ENCODE measurements at regions of chrX and their contacts with region 1.

Region 1: GRCh38 chrX:48737213-48737938 is 24.2 kb upstream of the GLOD5 start:
- DNase-seq: peak; percentile 92
- H3K4me3 Mint-ChIP-seq: peak overlapping the region; percentile 95
- H3K27ac Mint-ChIP-seq: peak overlapping the region; percentile 94
- H3K4me1 Mint-ChIP-seq: peaks cover 17% of the 10 kb centered on the region
- H3K27me3 Mint-ChIP-seq: no peaks in the 10 kb centered on the region

Region 2: GRCh38 chrX:48574270-48575266 is 162.8 kb before region 1 on chrX and contains the start of gene RBM3:
- CTCF ChIA-PET with region 1: interaction called, 3 read pairs
- intact Hi-C with region 1: loop called (anchors 5 kb)
- DNase-seq: peak; percentile 95
- H3K4me3 Mint-ChIP-seq: peak within 1 kb of the TSS; percentile 96
- H3K27ac Mint-ChIP-seq: peak within 1 kb of the TSS; percentile 99
- H3K4me1 Mint-ChIP-seq: peaks cover 32% of the 10 kb centered on the region
- H3K27me3 Mint-ChIP-seq: no peaks in the 10 kb centered on the region
- total RNA-seq, gene RBM3: 139 to 143 TPM

Region 3: GRCh38 chrX:48696301-48697181 is 40.8 kb before region 1 on chrX and contains the start of gene SUV39H1:
- CTCF ChIA-PET with region 1: interaction called, 8 read pairs
- intact Hi-C with region 1: loop called (anchors 1 kb)
- DNase-seq: peak; percentile 87
- H3K4me3 Mint-ChIP-seq: peak within 1 kb of the TSS; percentile 89
- H3K27ac Mint-ChIP-seq: peak within 1 kb of the TSS; percentile 91
- H3K4me1 Mint-ChIP-seq: peaks cover 36% of the 10 kb centered on the region
- H3K27me3 Mint-ChIP-seq: no peaks in the 10 kb centered on the region
- total RNA-seq, gene SUV39H1: 31.5 to 31.9 TPM

Region 4: GRCh38 chrX:48751343-48751742 is 14.0 kb after region 1 on chrX:
- CTCF ChIA-PET with region 1: no interaction called
- intact Hi-C with region 1: loop called (anchors 1 kb)
- DNase-seq: peak; percentile 28
- H3K4me3 Mint-ChIP-seq: no peak overlapping the region
- H3K27ac Mint-ChIP-seq: peak overlapping the region; percentile 24
- H3K4me1 Mint-ChIP-seq: peaks cover 6% of the 10 kb centered on the region
- H3K27me3 Mint-ChIP-seq: no peaks in the 10 kb centered on the region

Region 5: GRCh38 chrX:49002091-49002935 is 264.9 kb after region 1 on chrX and contains the start of gene GRIPAP1:
- CTCF ChIA-PET with region 1: no interaction called
- intact Hi-C with region 1: loop called (anchors 1 kb)
- DNase-seq: peak; percentile 85
- H3K4me3 Mint-ChIP-seq: peak within 1 kb of the TSS; percentile 99
- H3K27ac Mint-ChIP-seq: peak within 1 kb of the TSS; percentile 97
- H3K4me1 Mint-ChIP-seq: peaks cover 37% of the 10 kb centered on the region
- H3K27me3 Mint-ChIP-seq: no peaks in the 10 kb centered on the region
- total RNA-seq, gene GRIPAP1: 64.8 to 73.1 TPM

Region 6: DNA sequence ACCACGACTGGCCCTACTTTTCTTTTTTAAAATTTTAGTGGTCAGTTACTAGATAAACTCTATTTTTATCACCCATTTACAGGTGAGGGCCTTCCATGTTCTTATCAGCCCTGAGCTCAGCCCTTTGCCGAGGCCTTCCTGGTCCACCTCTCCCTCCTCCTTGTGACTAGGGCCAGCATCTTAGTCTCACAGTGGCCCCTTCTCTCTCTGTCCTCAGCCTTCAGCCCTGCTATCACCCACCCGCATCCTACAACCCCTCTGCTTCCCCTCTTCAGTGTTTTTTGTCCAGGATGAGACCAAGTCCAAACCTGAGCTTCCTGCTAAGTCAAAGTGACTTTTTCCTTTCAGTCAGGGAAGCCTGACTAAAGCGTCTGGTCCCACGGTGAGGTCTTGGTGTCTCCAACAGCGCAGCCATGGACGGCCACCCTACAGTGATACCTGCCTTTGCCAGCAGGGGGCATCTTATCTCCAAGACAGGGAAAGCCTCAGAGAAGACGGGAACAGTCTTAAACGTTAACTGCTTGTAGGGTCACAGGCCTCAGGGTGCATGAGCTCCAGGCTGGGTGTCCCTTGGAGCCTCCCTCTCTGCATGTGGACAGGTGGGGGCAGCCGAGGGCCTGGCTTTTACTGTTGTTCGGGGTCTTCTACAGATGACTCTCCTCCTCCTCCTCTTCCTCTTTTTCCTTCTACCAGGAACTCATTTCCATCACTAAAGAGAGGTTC is 554.4 kb after region 1 on chrX:
- CTCF ChIA-PET with region 1: no interaction called
- intact Hi-C with region 1: no loop called
- DNase-seq: peak; percentile 88
- H3K4me3 Mint-ChIP-seq: no peak overlapping the region
- H3K27ac Mint-ChIP-seq: no peak overlapping the region
- H3K4me1 Mint-ChIP-seq: peaks cover 35% of the 10 kb centered on the region
- H3K27me3 Mint-ChIP-seq: no peaks in the 10 kb centered on the region

Region 7: GRCh38 chrX:49656533-49656932 is 919.2 kb after region 1 on chrX:
- CTCF ChIA-PET with region 1: no interaction called
- intact Hi-C with region 1: no loop called
- DNase-seq: no peak
- H3K4me3 Mint-ChIP-seq: no peak overlapping the region
- H3K27ac Mint-ChIP-seq: no peak overlapping the region
- H3K4me1 Mint-ChIP-seq: peaks cover 3% of the 10 kb centered on the region
- H3K27me3 Mint-ChIP-seq: no peaks in the 10 kb centered on the region